Aorta (tissue), 5 donors: ENCODE measurements at regions of chr4 and their contacts with region 1.

Region 1: DNA sequence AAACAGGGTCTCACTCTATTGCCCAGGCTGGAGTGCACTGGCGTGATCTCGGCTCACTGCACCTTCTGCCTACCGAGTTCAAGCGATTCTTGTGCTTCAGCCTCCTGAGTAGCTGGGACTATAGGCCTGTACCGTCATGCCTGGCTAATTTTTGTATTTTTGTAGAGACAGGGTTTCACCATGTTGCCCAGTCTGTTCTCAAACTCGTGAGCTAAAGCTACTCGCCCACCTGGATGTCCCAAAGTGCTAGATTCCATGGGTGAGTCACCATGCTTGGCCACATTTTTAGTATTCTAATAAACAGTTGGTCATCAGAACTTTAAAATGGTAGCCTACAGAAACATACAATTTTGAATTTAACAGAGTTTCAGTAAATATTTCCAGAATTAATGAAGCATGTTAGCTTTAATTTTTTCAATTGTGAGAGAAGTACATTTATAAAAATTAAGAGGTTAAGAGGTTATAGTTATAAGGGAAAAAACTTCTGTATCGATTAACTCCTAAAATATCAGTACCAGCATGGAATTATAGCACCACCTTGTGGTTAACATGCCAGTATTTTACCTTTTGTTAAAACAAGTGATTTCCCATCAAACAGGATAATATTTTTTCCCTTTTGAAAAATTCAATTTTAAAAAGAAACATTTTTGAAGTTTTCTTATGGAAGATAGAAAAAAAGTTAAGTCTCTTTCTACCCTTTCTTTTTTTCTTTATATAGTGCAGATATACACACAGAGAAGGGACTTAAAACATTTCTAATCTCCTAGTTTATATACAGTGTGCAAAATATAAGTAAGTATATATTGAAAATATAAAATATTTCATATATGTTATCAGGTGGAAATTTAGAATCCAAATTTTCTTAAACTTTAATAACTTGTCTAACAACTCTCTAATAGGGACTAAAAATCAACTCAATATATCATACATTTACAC is 35.4 kb downstream of the CEP44 start:
- DNase-seq: no peak
- ATAC-seq: no peak
- H3K4me3 ChIP-seq: no peak overlapping the region
- H3K27ac ChIP-seq: no peak overlapping the region
- H3K4me1 ChIP-seq: no peaks in the 10 kb centered on the region
- H3K27me3 ChIP-seq: no peaks in the 10 kb centered on the region

Region 2: GRCh38 chr4:174217273-174218126 is 101.6 kb before region 1 on chr4:
- intact Hi-C with region 1: loop called in 1 of 2 experiments (anchors 5 kb)
- DNase-seq: peak in 1 of 2 donors; percentile 73
- ATAC-seq: peak; percentile 51
- H3K4me3 ChIP-seq: peak overlapping the region; percentile 39 to 42
- H3K27ac ChIP-seq: no peak overlapping the region
- H3K4me1 ChIP-seq: no peaks in the 10 kb centered on the region
- H3K27me3 ChIP-seq: no peaks in the 10 kb centered on the region

Region 3: GRCh38 chr4:174631901-174632758 is 313.0 kb after region 1 on chr4:
- intact Hi-C with region 1: no loop called
- DNase-seq: no peak
- ATAC-seq: no peak
- H3K4me3 ChIP-seq: no peak overlapping the region
- H3K27ac ChIP-seq: no peak overlapping the region
- H3K4me1 ChIP-seq: no peaks in the 10 kb centered on the region
- H3K27me3 ChIP-seq: no peaks in the 10 kb centered on the region